Heart left ventricle (tissue), 16 donors: ENCODE measurements at regions of chr10 and their contacts with region 1.

Region 1: GRCh38 chr10:61903221-61903927 is 1.9 kb downstream of the ARID5B start:
- DNase-seq: peak; percentile 55 to 83 (median 63)
- ATAC-seq: peak; percentile 43 to 86 (median 76)
- H3K4me3 ChIP-seq: peak overlapping the region; percentile 61 to 92 (median 82)
- H3K27ac ChIP-seq: peak overlapping the region; percentile 89 to 100 (median 94)
- H3K4me1 ChIP-seq: peaks cover 0 to 41% (median 17%) of the 10 kb centered on the region in 12 donors
- H3K27me3 ChIP-seq: no peaks in the 10 kb centered on the region
- CTCF ChIP-seq: peak in 9 of 12 donors; percentile 7 to 46 (median 32)
- POLR2A ChIP-seq: peak in 1 of 2 donors; percentile 38

Region 2: GRCh38 chr10:61643316-61643751 is 260.0 kb before region 1 on chr10:
- intact Hi-C with region 1: no loop called
- DNase-seq: no peak
- ATAC-seq: peak in 2 of 4 donors; percentile 41 to 91
- H3K4me3 ChIP-seq: no peak overlapping the region
- H3K27ac ChIP-seq: peak overlapping the region in 1 of 12 donors; percentile 39
- H3K4me1 ChIP-seq: peaks cover 0 to 11% (median 4%) of the 10 kb centered on the region in 12 donors
- H3K27me3 ChIP-seq: no peaks in the 10 kb centered on the region
- CTCF ChIP-seq: no peak
- POLR2A ChIP-seq: no peak

Region 3: GRCh38 chr10:61937631-61938351 is 34.4 kb after region 1 on chr10:
- intact Hi-C with region 1: loop called in 2 of 10 experiments (anchors 5 kb)
- DNase-seq: no peak
- ATAC-seq: peak in 2 of 4 donors; percentile 26 to 48
- H3K4me3 ChIP-seq: no peak overlapping the region
- H3K27ac ChIP-seq: peak overlapping the region in 4 of 12 donors; percentile 16 to 87 (median 52)
- H3K4me1 ChIP-seq: peaks cover 0 to 65% (median 17%) of the 10 kb centered on the region in 12 donors
- H3K27me3 ChIP-seq: no peaks in the 10 kb centered on the region
- CTCF ChIP-seq: no peak
- POLR2A ChIP-seq: no peak

Region 4: DNA sequence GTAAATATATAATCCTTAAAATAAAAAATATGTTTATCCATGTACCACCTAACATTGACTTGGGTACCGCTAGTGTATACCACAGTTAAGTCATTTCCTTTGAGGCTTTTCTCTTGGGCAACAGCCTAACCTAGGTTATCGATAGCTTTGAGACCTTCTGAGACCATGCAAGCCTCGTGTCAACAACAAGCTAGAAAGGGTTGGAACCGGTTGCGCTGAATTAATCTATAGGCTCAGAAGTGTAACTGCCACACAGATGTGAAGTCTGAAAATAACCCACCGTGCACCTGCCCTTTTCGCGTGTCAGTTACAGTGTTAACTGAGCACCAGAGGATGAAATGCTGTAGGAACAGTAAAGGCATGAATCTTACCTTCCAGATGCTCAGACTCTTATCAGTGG is 57.9 kb after region 1 on chr10:
- intact Hi-C with region 1: loop called in 2 of 10 experiments (anchors 5 to 10 kb)
- DNase-seq: no peak
- ATAC-seq: no peak
- H3K4me3 ChIP-seq: no peak overlapping the region
- H3K27ac ChIP-seq: peak overlapping the region in 1 of 12 donors; percentile 18
- H3K4me1 ChIP-seq: peaks cover 0 to 44% (median 10%) of the 10 kb centered on the region in 12 donors
- H3K27me3 ChIP-seq: no peaks in the 10 kb centered on the region
- CTCF ChIP-seq: no peak
- POLR2A ChIP-seq: no peak

Region 5: GRCh38 chr10:61987951-61988379 is 84.6 kb after region 1 on chr10:
- intact Hi-C with region 1: loop called in 3 of 10 experiments (anchors 5 to 10 kb)
- DNase-seq: no peak
- ATAC-seq: peak in 1 of 4 donors; percentile 47
- H3K4me3 ChIP-seq: peak overlapping the region in 5 of 12 donors; percentile 13 to 22 (median 16)
- H3K27ac ChIP-seq: peak overlapping the region in 10 of 12 donors; percentile 1 to 89 (median 54)
- H3K4me1 ChIP-seq: peaks cover 0 to 51% (median 35%) of the 10 kb centered on the region in 12 donors
- H3K27me3 ChIP-seq: no peaks in the 10 kb centered on the region
- CTCF ChIP-seq: no peak
- POLR2A ChIP-seq: no peak

Region 6: DNA sequence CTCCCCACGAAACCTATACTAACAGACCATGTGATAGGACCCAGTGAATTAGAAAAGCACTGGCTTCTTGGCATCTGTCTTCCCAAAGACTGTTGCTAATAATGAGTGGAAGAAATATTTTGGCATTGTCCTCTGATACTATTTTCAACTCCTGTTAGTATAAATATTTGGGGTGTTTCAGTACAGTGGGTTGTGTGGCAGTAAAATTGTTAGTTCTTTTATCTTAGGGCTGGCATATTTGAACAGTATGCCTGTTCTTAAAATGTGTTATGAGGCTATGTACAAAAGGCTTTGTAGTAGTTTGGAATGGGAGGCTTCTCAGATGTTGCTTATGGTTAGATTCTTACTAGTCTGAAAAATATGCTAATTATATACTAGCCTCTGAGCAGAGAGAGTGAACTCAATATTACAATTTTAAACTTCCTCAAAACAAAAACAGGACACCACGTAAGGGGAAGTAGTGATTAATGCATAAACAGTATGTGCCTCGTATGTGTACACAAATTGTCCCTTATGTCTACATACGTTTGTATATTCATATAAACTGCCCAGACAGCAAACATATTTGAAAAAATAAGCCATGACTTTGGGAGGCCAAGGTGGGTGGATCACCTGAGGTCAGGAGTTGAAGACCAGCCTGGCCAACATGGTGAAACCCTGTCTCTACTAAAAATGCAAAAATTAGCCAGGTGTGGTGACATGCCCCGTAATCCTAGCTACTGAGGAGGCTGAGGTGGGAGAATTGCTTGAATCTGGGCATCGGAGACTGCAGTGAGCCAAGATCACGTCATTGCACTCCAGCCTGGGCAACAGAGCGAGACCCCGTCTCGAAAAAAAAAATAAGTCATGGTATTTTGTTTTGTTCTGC is 113.5 kb after region 1 on chr10:
- intact Hi-C with region 1: loop called in 1 of 10 experiments (anchors 5 kb)
- DNase-seq: no peak
- ATAC-seq: peak; percentile 31 to 52 (median 44)
- H3K4me3 ChIP-seq: peak overlapping the region in 1 of 12 donors; percentile 15
- H3K27ac ChIP-seq: peak overlapping the region in 10 of 12 donors; percentile 4 to 78 (median 54)
- H3K4me1 ChIP-seq: peaks cover 0 to 61% (median 38%) of the 10 kb centered on the region in 12 donors
- H3K27me3 ChIP-seq: no peaks in the 10 kb centered on the region
- CTCF ChIP-seq: no peak
- POLR2A ChIP-seq: no peak

Region 7: DNA sequence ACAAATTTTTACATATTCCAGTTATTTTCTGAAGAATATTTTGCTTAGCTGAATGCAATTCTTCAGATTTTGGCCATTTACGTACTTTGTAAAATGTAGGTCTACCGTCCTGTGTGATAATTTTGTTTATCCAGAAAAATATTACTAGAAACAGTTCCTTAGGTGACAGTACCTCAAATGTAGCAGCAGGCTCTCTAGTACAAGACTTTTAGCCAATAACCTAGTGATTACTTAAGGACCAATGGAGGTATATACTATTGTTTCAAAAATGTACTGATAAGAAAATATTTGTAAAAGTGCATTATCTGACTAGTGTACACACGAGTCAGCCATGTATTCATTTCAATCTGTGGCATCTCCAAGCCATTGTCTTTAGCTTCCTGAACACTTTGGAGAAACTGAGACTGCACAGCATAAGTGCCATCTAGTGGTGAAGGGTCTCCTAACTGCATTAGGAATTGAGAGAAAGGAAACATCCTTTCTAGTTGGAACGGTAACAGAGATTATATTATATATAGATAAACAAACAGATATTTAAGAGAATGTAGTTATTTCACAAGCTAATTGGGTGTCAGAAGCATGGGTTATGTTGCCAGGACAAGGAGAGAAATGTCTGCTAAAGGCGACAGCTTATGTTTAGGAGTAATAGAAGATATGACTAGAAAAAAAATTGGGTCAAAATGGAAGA is 341.6 kb after region 1 on chr10:
- intact Hi-C with region 1: loop called in 7 of 10 experiments (anchors 2 to 5 kb)
- DNase-seq: peak in 2 of 5 donors; percentile 56 to 57
- ATAC-seq: peak in 3 of 4 donors; percentile 80 to 88 (median 85)
- H3K4me3 ChIP-seq: peak overlapping the region in 3 of 12 donors; percentile 14 to 48 (median 31)
- H3K27ac ChIP-seq: peak overlapping the region in 2 of 12 donors; percentile 7 to 85
- H3K4me1 ChIP-seq: peaks cover 0 to 38% (median 6%) of the 10 kb centered on the region in 12 donors
- H3K27me3 ChIP-seq: no peaks in the 10 kb centered on the region
- CTCF ChIP-seq: peak; percentile 80 to 96 (median 88)
- POLR2A ChIP-seq: no peak